ENCODE measurements at regions of chr2 and their contacts with region 1.

Region 1: DNA sequence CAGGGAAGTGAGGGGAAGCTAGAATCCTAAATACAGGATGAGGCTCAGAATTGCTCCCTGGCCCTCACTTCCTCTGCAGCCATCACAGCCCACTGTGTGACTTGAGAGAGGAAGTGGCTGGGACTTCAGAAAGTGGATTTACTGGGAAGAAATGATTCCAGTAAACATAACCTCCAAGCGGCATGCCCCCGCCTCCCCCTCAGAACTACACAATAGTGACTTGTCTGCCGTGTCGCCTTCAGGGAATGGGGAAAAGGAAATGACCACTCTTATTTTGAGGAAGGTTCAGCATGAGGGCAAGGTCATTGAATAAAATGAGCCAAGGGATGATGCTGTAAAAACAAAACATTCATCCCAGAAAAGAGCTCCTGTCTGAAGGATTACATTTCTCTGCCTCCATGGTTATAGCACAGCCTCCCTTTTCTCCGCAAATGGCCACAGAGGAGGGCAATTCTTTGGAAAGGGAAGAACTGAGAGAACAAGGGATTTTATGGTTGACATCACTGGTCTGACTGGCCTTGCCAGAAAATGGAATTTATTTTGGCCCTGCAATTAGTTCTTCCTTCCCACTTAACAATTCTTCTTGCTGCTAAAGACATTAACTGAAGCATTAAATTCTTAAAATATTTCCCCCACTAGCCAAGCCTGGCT is 78.9 kb upstream of the DAPL1 start:
- DNase-seq: peak; percentile 98
- H3K4me3 ChIP-seq: no peak overlapping the region
- H3K27ac ChIP-seq: peak overlapping the region; percentile 76
- H3K4me1 ChIP-seq: peaks cover 38% of the 10 kb centered on the region
- H3K27me3 ChIP-seq: no peaks in the 10 kb centered on the region
- CTCF ChIP-seq: no peak
- POLR2A ChIP-seq: no peak

Region 2: GRCh38 chr2:158214438-158214837 is 501.8 kb before region 1 on chr2:
- CTCF ChIA-PET with region 1: no interaction called
- POLR2A ChIA-PET with region 1: no interaction called
- dilution Hi-C with region 1: no loop called
- intact Hi-C with region 1: loop called (anchors 1 kb)
- DNase-seq: peak; percentile 82
- H3K4me3 ChIP-seq: no peak overlapping the region
- H3K27ac ChIP-seq: peak overlapping the region; percentile 63
- H3K4me1 ChIP-seq: peaks cover 8% of the 10 kb centered on the region
- H3K27me3 ChIP-seq: peaks cover 3 to 4% of the 10 kb centered on the region in 2 experiments
- CTCF ChIP-seq: no peak
- POLR2A ChIP-seq: no peak

Region 3: GRCh38 chr2:158546412-158547144 is 169.7 kb before region 1 on chr2:
- CTCF ChIA-PET with region 1: no interaction called
- POLR2A ChIA-PET with region 1: no interaction called
- dilution Hi-C with region 1: no loop called
- intact Hi-C with region 1: loop called (anchors 5 kb)
- DNase-seq: no peak
- H3K4me3 ChIP-seq: no peak overlapping the region
- H3K27ac ChIP-seq: no peak overlapping the region
- H3K4me1 ChIP-seq: peaks cover 7% of the 10 kb centered on the region
- H3K27me3 ChIP-seq: no peaks in the 10 kb centered on the region
- CTCF ChIP-seq: no peak
- POLR2A ChIP-seq: no peak

Region 4: DNA sequence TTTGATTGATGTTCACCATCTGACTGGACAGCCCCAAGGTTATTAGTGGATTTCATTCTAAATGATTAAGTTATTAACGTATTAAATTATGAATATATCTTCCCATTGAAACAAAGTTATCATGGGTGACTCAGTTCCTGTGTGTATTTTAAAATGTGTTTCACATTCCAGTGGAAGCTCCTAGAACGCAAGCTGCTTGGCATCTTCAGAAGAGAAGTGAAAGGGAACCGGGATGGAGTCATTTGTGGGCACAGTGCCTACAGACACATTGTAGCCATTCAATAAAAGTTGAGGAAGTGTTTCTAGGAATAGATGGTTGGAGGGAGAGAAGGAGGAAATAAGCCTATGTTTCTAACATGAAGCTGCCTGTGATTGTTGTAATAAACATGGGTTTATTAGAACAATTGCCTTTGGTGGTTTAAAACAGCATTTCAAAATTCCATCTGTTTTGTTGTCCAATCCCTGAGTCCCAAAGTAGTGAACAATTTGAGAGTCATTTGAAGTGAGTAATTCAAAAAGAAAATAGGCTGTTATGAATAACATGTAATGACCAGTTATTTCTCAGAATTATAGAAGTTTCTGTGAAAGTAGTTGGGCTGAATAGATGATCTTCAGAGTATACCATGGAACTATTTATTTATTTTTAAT is 116.0 kb before region 1 on chr2:
- CTCF ChIA-PET with region 1: interaction called, 3 read pairs
- POLR2A ChIA-PET with region 1: no interaction called
- dilution Hi-C with region 1: no loop called
- intact Hi-C with region 1: loop called (anchors 1 kb)
- DNase-seq: peak; percentile 99
- H3K4me3 ChIP-seq: no peak overlapping the region
- H3K27ac ChIP-seq: peak overlapping the region; percentile 83
- H3K4me1 ChIP-seq: peaks cover 27% of the 10 kb centered on the region
- H3K27me3 ChIP-seq: no peaks in the 10 kb centered on the region
- CTCF ChIP-seq: no peak
- POLR2A ChIP-seq: no peak

Region 5: GRCh38 chr2:158635961-158636601 is 80.2 kb before region 1 on chr2:
- CTCF ChIA-PET with region 1: no interaction called
- POLR2A ChIA-PET with region 1: no interaction called
- dilution Hi-C with region 1: no loop called
- intact Hi-C with region 1: loop called (anchors 1 kb)
- DNase-seq: peak; percentile 75
- H3K4me3 ChIP-seq: no peak overlapping the region
- H3K27ac ChIP-seq: peak overlapping the region; percentile 61
- H3K4me1 ChIP-seq: peaks cover 14% of the 10 kb centered on the region
- H3K27me3 ChIP-seq: no peaks in the 10 kb centered on the region
- CTCF ChIP-seq: no peak
- POLR2A ChIP-seq: no peak

Region 6: DNA sequence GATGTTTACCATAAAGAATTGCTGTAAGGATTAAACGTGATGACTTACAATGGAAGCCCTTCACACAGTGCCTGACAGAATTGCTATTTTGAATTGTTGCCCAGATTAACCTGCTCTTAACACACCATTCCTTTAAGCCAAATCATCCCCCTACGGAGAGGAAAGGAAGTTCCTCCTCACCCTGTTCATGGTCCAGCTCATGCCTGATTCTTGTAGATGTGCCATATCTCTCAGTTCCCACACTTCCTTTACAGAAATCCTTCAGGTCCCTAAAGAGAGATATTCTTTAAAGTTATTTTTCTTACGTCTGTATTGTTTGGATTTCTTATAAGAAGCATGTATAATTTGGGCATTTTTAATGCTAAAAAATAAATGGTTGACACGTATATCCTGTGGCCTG is 48.7 kb before region 1 on chr2:
- CTCF ChIA-PET with region 1: interaction called, 15 read pairs
- POLR2A ChIA-PET with region 1: interaction called, 6 read pairs
- dilution Hi-C with region 1: no loop called
- intact Hi-C with region 1: loop called (anchors 1 kb)
- DNase-seq: peak; percentile 97
- H3K4me3 ChIP-seq: peak overlapping the region in 1 of 3 experiments; percentile 30
- H3K27ac ChIP-seq: peak overlapping the region; percentile 82
- H3K4me1 ChIP-seq: peaks cover 34% of the 10 kb centered on the region
- H3K27me3 ChIP-seq: no peaks in the 10 kb centered on the region
- CTCF ChIP-seq: no peak
- POLR2A ChIP-seq: peak; percentile 61

Region 7: GRCh38 chr2:159118115-159118858 is 402.0 kb after region 1 on chr2:
- CTCF ChIA-PET with region 1: no interaction called
- POLR2A ChIA-PET with region 1: no interaction called
- dilution Hi-C with region 1: no loop called
- intact Hi-C with region 1: no loop called
- DNase-seq: peak; percentile 88
- H3K4me3 ChIP-seq: no peak overlapping the region
- H3K27ac ChIP-seq: peak overlapping the region; percentile 21
- H3K4me1 ChIP-seq: peaks cover 18% of the 10 kb centered on the region
- H3K27me3 ChIP-seq: no peaks in the 10 kb centered on the region
- CTCF ChIP-seq: peak; percentile 84 to 85
- POLR2A ChIP-seq: no peak

Measured in endothelial cell of umbilical vein (primary cell).